ENCODE measurements at regions of chr9 and their contacts with region 1.

Region 1: DNA sequence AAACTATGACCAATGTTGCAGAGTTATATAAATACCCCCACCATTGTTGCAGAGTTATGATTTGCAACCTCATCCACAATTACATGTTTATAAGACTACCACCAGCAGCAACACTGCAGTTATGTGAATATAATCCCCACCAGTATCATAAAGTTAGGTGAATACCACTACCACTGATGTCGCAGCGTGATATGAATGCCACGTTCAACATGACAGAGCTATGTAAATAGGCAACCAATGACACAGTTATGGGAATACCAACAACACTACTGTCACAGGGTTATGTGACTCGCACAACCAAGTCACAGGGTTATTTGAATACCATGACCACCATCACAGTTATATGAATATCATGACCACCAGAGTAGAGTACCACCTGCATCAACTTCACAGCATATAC is 63.9 kb downstream of the SHC3 start:
- DNase-seq: no peak

Region 2: DNA sequence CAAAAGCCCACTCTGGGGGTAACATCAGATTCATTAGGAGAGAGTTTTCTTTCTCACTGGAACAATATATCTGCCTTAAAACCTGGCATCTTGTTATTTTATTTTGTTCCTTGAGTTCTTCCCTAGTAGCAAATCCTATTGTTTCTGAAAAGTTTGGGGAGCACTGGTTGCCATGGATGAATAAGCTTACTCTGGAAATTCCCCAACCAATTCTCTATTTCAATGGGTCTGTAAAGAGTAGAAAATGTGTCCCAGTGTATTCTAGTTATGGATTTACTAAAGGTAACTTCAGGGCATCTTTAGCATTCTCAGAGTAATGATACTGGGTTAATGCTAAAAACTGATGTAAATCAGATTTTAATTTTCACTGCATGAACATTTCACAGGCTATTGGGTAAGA is 217.7 kb before region 1 on chr9:
- intact Hi-C with region 1: no loop called
- DNase-seq: no peak

Region 3: DNA sequence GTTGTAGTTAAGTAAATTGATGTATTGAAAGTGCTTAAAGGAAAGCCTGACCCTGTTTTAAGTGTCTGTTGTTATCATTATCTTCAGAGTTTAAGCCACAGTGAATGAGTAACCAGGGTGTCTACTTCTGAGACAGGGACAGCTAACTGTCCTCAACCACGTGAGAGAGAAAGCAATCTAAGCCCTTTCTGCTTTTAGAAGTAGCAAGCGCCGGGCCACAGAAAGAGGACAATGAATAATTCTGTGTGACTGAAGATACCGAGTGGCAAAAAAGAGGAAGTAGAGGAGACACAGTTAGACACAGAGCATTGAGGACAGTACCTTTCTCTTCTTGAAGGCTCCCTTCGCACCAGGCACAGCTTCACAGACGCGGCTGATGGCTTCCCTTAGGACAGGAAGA is 37.2 kb before region 1 on chr9:
- intact Hi-C with region 1: loop called in 1 of 2 experiments (anchors 1 kb)
- DNase-seq: peak; percentile 15

Region 4: GRCh38 chr9:89400403-89401116 is 285.8 kb after region 1 on chr9:
- intact Hi-C with region 1: no loop called
- DNase-seq: no peak

Measured in posterior vena cava (tissue), 2 donors.